ENCODE measurements at regions of chr12 and their contacts with region 1.

Region 1: GRCh38 chr12:95117178-95117599 is 43.8 kb upstream of the NR2C1 start:
- DNase-seq: peak; percentile 83
- ATAC-seq: peak; percentile 61
- H3K4me3 ChIP-seq: peak overlapping the region; percentile 47
- H3K27ac ChIP-seq: peak overlapping the region; percentile 78
- H3K4me1 ChIP-seq: peaks cover 49% of the 10 kb centered on the region
- H3K27me3 ChIP-seq: no peaks in the 10 kb centered on the region
- CTCF ChIP-seq: peak; percentile 92

Region 2: DNA sequence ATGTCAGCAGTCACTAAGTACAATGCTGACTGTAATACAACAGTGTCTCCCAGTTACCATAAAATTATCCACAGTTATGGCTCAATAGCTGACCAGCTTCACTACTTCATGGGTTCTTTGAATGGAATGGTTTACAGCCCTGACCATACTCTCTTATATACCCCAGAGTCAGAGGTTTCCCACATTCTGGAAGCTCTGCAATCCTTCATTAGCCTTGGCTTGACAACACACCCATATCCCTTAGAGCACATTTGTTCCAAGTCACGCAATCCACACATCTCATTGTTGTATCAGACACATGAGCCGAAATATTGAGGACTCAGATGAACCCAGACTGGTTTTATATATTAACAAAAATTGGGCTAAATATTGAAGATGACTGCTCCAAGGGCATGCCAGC is 1178.3 kb before region 1 on chr12:
- CTCF ChIA-PET with region 1: no interaction called
- POLR2A ChIA-PET with region 1: no interaction called
- intact Hi-C with region 1: no loop called
- DNase-seq: no peak
- ATAC-seq: no peak
- H3K4me3 ChIP-seq: no peak overlapping the region
- H3K27ac ChIP-seq: no peak overlapping the region
- H3K4me1 ChIP-seq: 0 out of 2 replicates have a peak, but pooled peaks cover under 1% of the 10 kb centered on the region
- H3K27me3 ChIP-seq: no peaks in the 10 kb centered on the region
- CTCF ChIP-seq: no peak

Region 3: GRCh38 chr12:94980577-94980976 is 136.6 kb before region 1 on chr12:
- CTCF ChIA-PET with region 1: no interaction called
- POLR2A ChIA-PET with region 1: no interaction called
- intact Hi-C with region 1: no loop called
- DNase-seq: peak; percentile 2
- ATAC-seq: no peak
- H3K4me3 ChIP-seq: no peak overlapping the region
- H3K27ac ChIP-seq: no peak overlapping the region
- H3K4me1 ChIP-seq: no peaks in the 10 kb centered on the region
- H3K27me3 ChIP-seq: no peaks in the 10 kb centered on the region
- CTCF ChIP-seq: peak; percentile 33; the same call in 1 of the 2 replicates

Region 4: DNA sequence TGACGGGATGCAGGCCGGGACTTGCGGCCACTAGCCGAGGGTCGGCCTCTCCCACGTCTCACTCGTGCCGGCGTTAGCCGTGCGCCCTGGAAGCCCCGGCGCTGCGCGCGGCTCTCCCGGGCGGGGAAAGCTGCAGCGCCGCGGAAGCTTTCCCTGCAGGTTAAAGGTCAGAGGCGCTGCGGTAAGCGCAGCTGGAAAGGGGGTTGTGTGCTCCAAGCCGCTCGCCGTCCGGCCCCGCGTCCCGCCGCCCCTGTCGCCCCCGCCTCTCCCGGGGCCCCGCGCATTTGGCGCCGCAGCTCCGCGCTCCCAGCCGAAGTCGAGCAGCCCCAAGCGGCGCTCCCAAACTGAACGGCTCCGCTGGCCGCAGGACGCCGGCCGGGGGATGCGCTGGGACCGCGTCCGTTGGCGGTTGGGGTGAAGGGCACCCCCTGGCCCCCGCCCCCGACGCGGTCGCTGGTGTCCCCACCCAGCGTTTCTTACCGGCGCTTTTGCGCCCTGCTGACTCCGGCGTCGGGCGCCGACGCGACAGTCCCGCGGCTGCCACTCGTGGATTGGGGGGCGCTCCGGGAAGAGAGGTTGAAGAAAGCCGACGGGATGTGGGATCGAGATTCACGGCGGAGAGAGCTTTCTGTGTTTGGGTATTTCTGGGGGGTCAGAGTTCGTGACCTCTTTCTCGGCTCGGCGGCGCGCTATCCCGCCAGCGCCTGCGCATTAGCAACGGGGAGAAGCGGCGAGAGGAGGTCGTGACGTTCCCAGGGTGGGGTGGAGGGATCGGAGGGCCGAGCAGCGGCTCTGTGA is 44.1 kb before region 1 on chr12 and contains the start of gene NR2C1:
- CTCF ChIA-PET with region 1: interaction called, 5 read pairs
- POLR2A ChIA-PET with region 1: interaction called, 5 read pairs
- intact Hi-C with region 1: loop called (anchors 5 kb)
- DNase-seq: peak; percentile 94
- ATAC-seq: peak; percentile 93
- H3K4me3 ChIP-seq: peak within 1 kb of the TSS; percentile 100
- H3K27ac ChIP-seq: peak within 1 kb of the TSS; percentile 46
- H3K4me1 ChIP-seq: peaks cover 6% of the 10 kb centered on the region
- H3K27me3 ChIP-seq: no peaks in the 10 kb centered on the region
- CTCF ChIP-seq: no peak
- total RNA-seq, gene NR2C1: 31.6 and 43.7 TPM in 2 replicates

Region 5: GRCh38 chr12:95102916-95103671 is 14.1 kb before region 1 on chr12:
- CTCF ChIA-PET with region 1: no interaction called
- POLR2A ChIA-PET with region 1: no interaction called
- intact Hi-C with region 1: loop called (anchors 1 kb)
- DNase-seq: peak; percentile 99
- ATAC-seq: peak; percentile 70
- H3K4me3 ChIP-seq: peak overlapping the region; percentile 34
- H3K27ac ChIP-seq: peak overlapping the region; percentile 75
- H3K4me1 ChIP-seq: peaks cover 52% of the 10 kb centered on the region
- H3K27me3 ChIP-seq: no peaks in the 10 kb centered on the region
- CTCF ChIP-seq: no peak

Region 6: GRCh38 chr12:95229636-95230035 is 112.4 kb after region 1 on chr12:
- CTCF ChIA-PET with region 1: no interaction called
- POLR2A ChIA-PET with region 1: interaction called, 14 read pairs
- intact Hi-C with region 1: no loop called
- DNase-seq: no peak
- ATAC-seq: no peak
- H3K4me3 ChIP-seq: no peak overlapping the region
- H3K27ac ChIP-seq: no peak overlapping the region
- H3K4me1 ChIP-seq: peaks cover 4% of the 10 kb centered on the region
- H3K27me3 ChIP-seq: no peaks in the 10 kb centered on the region
- CTCF ChIP-seq: no peak

Region 7: DNA sequence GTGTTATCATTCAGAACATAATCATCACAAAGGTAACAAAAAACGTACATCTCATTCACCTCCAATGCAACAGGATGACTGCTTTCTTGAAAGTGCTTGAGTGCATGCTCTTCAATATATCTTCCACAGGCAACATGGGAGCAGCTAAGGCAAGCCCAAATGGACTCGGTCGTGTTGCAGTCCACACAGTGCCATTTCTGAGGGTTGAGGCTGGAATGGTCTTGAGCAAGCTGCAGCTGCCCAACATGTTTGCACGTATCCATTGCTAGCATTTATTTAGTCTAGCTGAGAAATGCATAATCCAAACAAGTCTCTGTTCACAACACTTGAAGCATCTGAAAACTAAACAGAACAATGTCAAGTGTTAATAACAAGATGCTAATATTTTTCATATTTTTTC is 416.8 kb after region 1 on chr12:
- CTCF ChIA-PET with region 1: interaction called, 12 read pairs
- POLR2A ChIA-PET with region 1: no interaction called
- intact Hi-C with region 1: loop called (anchors 1 kb)
- DNase-seq: no peak
- ATAC-seq: no peak
- H3K4me3 ChIP-seq: no peak overlapping the region
- H3K27ac ChIP-seq: no peak overlapping the region
- H3K4me1 ChIP-seq: peaks cover 5% of the 10 kb centered on the region; the same call in 1 of the 2 replicates
- H3K27me3 ChIP-seq: no peaks in the 10 kb centered on the region
- CTCF ChIP-seq: no peak